Activated T-helper 1 cell treated with anti-CD3 and anti-CD28 coated beads, Interleukin-12 subunit alpha, Interleukin-12 subunit beta, Interleukin-2, Interleukin-4 antibody, amounts not matched to agents 30 ng/mL and 10 ng/mL and 1 ng/mL, durations not matched to agents 14 hours and 24 hours and 36 hours (primary cell): ENCODE measurements at regions of chr2 and their contacts with region 1.

Region 1: GRCh38 chr2:203453858-203454451 is 81.1 kb downstream of the RAPH1 start:
- DNase-seq: no peak
- H3K4me3 Mint-ChIP-seq: no peak overlapping the region
- H3K27ac Mint-ChIP-seq: no peak overlapping the region
- H3K4me1 Mint-ChIP-seq: peaks cover 4% of the 10 kb centered on the region
- H3K27me3 Mint-ChIP-seq: no peaks in the 10 kb centered on the region

Region 2: DNA sequence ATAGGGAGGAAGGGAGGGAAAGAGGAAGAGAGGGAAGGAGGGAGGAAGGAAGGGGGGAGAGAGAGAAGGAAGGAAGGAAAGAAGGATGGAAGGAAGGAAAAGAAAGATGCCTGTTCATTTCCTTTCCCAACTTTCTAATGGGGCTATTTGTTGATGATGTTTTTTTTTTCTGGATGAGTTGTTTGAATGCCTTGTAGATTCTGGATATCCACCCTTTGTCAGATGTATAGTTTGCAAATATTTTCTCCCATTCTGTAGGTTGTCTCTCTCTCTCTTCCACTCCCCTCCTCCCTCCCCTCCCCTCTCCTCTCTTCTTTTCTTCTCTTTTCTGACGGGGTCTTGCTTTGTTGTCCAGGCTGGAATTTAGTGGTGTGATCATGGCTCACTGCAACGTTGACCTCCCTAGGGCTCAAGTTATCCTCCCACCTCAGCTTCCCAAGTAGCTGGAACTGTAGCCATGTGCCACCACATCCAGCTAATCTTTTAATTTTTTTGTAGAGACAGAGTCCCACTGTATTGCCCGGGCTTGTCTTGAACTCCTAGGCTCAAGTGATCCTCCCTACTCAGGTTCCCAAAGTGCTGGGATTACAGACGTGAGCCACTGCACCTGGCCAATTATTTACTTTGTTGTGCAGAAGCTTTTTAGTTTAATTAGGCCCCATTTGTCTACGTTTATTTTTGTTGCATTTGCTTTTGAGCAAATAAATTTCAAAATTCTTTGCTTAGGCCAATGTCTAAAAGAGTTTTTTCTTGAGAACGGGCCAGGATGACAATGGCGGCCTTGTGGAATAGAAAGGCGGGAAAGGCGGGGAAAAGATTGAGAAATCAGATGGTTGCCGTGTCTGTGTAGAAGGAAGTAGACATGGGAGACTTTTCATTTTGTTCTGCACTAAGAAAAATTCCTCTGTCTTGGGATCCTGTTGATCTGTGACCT is 876.4 kb before region 1 on chr2:
- intact Hi-C with region 1: loop called (anchors 1 kb)
- DNase-seq: no peak
- H3K4me3 Mint-ChIP-seq: no peak overlapping the region
- H3K27ac Mint-ChIP-seq: no peak overlapping the region
- H3K4me1 Mint-ChIP-seq: peaks cover under 1% of the 10 kb centered on the region
- H3K27me3 Mint-ChIP-seq: no peaks in the 10 kb centered on the region

Region 3: GRCh38 chr2:202588647-202589581 is 865.0 kb before region 1 on chr2:
- intact Hi-C with region 1: loop called (anchors 5 kb)
- DNase-seq: peak; percentile 49
- H3K4me3 Mint-ChIP-seq: no peak overlapping the region
- H3K27ac Mint-ChIP-seq: no peak overlapping the region
- H3K4me1 Mint-ChIP-seq: peaks cover 7% of the 10 kb centered on the region
- H3K27me3 Mint-ChIP-seq: no peaks in the 10 kb centered on the region

Region 4: GRCh38 chr2:202831242-202832220 is 622.4 kb before region 1 on chr2:
- intact Hi-C with region 1: loop called (anchors 1 kb)
- DNase-seq: peak; percentile 11
- H3K4me3 Mint-ChIP-seq: no peak overlapping the region
- H3K27ac Mint-ChIP-seq: no peak overlapping the region
- H3K4me1 Mint-ChIP-seq: peaks cover 10% of the 10 kb centered on the region
- H3K27me3 Mint-ChIP-seq: peaks cover 3% of the 10 kb centered on the region

Region 5: DNA sequence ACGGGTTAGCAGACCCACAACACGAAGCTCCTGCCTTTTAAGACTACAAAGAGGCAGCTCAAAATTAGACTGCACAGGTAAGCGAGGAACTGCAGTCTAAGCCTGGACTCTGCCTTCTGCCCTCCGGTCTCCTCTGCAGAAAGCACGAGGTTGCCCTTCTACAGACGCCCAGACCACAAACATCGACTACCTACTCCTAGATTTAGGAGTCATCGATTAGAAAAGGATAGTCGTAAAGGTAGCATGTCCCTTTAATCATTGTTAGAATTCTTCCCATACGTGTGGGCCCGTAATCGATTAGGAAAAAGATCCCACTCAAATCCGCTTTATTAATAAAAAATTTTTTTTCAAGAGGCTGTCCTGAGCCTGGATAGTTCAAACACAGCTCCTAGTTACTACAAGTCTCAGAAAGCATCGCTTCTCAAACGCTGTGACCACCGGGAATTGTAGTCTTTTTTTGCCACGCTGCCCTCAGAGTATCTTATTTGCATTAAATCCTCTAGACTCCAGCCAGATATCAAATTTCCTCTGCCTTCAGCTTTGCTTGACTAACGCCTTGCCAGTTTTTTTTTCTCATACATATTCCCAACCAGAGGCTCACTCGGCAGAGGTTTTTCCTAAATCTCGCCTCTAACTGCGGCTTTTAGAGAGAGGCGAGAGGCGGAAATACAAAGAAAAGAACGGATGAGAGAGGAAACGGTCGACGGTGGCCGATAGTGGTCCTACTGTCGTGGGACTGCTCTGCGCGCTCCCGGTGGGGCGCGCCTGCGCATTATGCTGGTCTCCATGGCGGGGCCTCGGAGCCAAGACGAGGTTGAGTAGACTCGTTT is 542.2 kb before region 1 on chr2 and contains the starts of genes CARF and WDR12:
- intact Hi-C with region 1: loop called (anchors 10 kb)
- DNase-seq: peak; percentile 87
- H3K4me3 Mint-ChIP-seq: peak within 1 kb of the TSS; percentile 96
- H3K27ac Mint-ChIP-seq: peak within 1 kb of the TSS; percentile 98
- H3K4me1 Mint-ChIP-seq: peaks cover 31% of the 10 kb centered on the region
- H3K27me3 Mint-ChIP-seq: no peaks in the 10 kb centered on the region
- total RNA-seq, gene CARF: 3.6 and 4.3 TPM in 2 replicates
- total RNA-seq, gene WDR12: 149 and 165 TPM in 2 replicates

Region 6: GRCh38 chr2:202989749-202990148 is 464.2 kb before region 1 on chr2:
- intact Hi-C with region 1: no loop called
- DNase-seq: no peak
- H3K4me3 Mint-ChIP-seq: no peak overlapping the region
- H3K27ac Mint-ChIP-seq: no peak overlapping the region
- H3K4me1 Mint-ChIP-seq: no peaks in the 10 kb centered on the region
- H3K27me3 Mint-ChIP-seq: no peaks in the 10 kb centered on the region

Region 7: DNA sequence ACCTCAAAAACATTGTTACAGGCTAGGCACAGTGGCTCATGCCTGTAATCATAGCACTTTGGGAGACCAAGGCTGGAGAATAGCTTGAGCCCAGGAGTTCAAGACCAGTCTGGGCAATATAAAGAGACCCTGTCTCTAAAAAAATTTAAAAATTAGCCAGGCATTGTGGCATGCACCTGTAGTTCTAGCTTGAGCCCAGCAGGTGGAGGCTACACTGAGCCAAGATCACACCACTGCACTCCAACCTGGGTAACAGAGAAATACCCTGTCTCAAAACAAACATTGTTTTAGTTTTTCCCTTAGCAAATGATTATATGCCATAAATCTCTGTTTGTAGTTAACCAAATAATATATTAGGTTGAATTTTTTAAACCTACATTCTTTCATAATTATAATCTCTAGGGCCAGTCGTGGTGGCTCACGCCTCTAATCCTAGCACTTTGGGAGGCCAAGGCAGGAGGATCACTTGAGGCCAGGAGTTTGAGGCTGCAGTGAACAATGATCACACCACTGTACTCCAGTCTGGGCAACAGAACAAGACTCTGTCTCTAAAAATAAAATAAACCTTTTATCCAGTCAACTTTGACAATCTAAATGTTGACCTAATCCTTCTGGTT is 228.4 kb before region 1 on chr2:
- intact Hi-C with region 1: loop called (anchors 1 kb)
- DNase-seq: no peak
- H3K4me3 Mint-ChIP-seq: no peak overlapping the region
- H3K27ac Mint-ChIP-seq: no peak overlapping the region
- H3K4me1 Mint-ChIP-seq: no peaks in the 10 kb centered on the region
- H3K27me3 Mint-ChIP-seq: peaks cover 2% of the 10 kb centered on the region

Region 8: DNA sequence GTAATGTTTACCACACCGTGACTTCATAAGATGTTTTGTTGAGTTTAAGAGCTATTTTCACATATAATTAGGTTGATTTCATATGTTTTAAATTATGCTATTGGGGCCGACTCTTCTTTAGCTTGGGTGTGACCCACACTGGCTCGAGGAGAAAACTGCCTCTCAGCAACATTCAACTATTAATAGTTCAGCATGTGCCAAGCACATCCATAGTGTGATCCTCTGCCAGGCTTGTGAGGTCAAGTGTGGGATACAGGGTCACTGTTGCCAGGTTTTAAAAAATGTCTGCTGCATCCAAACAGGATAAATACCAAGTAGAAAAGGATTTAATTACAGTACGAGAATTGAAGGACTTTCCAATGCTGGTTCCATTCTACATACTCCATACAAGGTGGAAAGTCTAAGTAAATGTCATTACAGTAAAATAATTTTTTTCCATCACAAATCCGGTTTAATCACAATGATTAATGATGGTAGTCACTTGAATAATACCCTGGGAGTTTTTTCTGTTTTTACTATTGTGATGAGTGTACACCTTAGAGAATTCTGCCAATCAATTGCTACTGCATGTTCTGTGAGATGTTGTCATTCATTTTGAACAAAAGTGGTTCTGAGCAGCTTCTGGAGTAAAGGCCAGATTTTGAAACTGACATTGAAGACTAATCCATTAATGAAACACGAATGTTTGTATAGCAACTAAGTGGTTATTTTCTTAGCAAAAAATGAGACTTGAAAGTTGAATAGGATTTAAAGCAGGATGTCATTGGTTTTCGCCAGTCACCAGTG is 41.2 kb before region 1 on chr2:
- intact Hi-C with region 1: no loop called
- DNase-seq: no peak
- H3K4me3 Mint-ChIP-seq: no peak overlapping the region
- H3K27ac Mint-ChIP-seq: no peak overlapping the region
- H3K4me1 Mint-ChIP-seq: no peaks in the 10 kb centered on the region
- H3K27me3 Mint-ChIP-seq: no peaks in the 10 kb centered on the region

Region 9: GRCh38 chr2:204072443-204073324 is 618.7 kb after region 1 on chr2:
- intact Hi-C with region 1: no loop called
- DNase-seq: peak; percentile 44
- H3K4me3 Mint-ChIP-seq: no peak overlapping the region
- H3K27ac Mint-ChIP-seq: no peak overlapping the region
- H3K4me1 Mint-ChIP-seq: peaks cover 13% of the 10 kb centered on the region
- H3K27me3 Mint-ChIP-seq: no peaks in the 10 kb centered on the region